H1 (cell line): ENCODE measurements at regions of chr22 and their contacts with region 1.

Region 1: GRCh38 chr22:43014869-43015676 is at the start of gene PACSIN2:
- DNase-seq: peak; percentile 93 to 99
- H3K4me3 ChIP-seq: peak within 1 kb of the TSS; percentile 67 to 87 (median 86)
- H3K27ac ChIP-seq: 0 out of 2 replicates have a peak within 1 kb of the TSS, but pooled peaks have one; percentile 51
- H3K4me1 ChIP-seq: peaks cover 7 to 16% (median 10%) of the 10 kb centered on the region in 4 experiments
- H3K27me3 ChIP-seq: peaks cover 0 to 5% (median 3%) of the 10 kb centered on the region in 4 experiments; a peak in 4 of 7 replicates
- CTCF ChIP-seq: no peak
- EP300 ChIP-seq: no peak
- POLR2A ChIP-seq: peak; percentile 97 to 100
- RAD21 ChIP-seq: no peak
- total RNA-seq, gene PACSIN2: 62.6 and 64.2 TPM in 2 replicates

Region 2: DNA sequence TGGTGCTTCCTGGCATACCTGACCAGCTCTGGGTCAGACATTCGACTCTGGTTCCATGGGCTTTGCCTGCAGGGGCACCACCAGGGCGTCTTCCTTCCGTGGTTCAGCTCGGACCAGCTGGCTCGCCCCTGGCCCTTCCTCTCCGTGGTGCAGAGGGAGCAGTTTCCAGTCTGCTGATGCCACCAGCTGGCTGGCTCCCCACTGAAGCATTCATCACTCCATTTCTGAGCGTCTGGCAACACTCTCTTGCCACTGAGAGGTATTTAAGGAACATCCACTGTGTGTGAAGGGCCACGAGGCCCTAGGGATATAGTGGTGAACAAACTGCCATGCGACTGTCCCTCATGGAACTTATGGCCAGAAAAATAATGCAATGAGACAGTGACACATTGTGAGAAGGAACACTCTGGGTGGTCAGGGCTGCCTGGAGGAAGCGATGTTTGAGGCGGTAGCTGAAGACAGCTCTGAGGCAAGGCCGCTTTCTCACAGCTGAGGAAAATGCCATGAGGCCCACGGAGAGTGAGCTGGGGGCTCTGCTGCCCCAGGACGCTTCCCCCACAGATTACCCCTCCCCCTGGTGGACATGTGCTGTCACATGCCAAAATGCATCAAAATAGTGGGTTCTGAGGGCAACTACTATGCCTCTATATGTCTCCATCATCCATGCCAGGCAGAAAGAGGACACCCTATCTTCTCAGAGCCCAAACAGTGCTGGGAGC is 113.1 kb before region 1 on chr22:
- CTCF ChIA-PET with region 1: interaction called, 5 read pairs
- POLR2A ChIA-PET with region 1: interaction called, 18 read pairs
- DNase-seq: no peak
- H3K4me3 ChIP-seq: no peak overlapping the region
- H3K27ac ChIP-seq: no peak overlapping the region
- H3K4me1 ChIP-seq: peaks cover 0 to 13% (median 6%) of the 10 kb centered on the region in 4 experiments; a peak in 5 of 7 replicates
- H3K27me3 ChIP-seq: no peaks in the 10 kb centered on the region
- CTCF ChIP-seq: peak; percentile 37 to 48 (median 42)
- EP300 ChIP-seq: no peak
- POLR2A ChIP-seq: no peak
- RAD21 ChIP-seq: peak in 1 of 2 experiments; percentile 37; a peak in 1 of 4 replicates

Region 3: DNA sequence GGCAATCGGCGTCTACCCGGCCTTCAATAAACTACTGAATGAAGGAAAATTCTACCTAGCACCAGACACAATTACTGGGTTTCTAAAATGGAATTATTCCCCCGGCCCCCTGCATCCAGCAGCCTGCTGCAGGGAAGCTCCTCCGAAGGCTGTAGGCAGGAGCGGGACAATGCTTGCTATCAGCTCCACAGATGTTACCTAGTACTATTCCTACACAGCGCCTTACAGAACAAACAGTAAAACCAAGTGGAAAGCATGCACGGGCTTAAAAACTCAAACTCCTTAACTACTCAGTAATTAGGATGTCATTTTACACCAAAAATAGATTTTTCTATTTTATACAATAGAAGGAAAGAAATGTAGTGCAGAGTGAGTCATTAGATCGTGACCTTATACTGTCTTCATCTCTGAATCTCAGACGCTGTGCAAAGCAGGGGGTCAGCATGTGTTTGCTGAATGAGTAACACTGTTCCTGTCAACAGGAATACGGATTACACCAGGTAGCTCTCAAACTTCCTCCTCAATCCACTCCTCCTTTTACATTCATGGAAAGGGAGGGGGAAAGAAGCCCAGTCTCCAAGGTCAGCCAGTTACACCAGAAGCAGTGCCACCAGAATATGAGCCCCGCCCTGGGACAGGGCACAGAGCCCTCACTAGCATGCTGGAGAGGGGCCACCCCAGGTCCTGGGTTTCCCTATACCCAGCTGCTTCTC is 75.0 kb before region 1 on chr22:
- CTCF ChIA-PET with region 1: interaction called, 4 read pairs
- POLR2A ChIA-PET with region 1: interaction called, 15 read pairs
- DNase-seq: no peak
- H3K4me3 ChIP-seq: no peak overlapping the region
- H3K27ac ChIP-seq: no peak overlapping the region
- H3K4me1 ChIP-seq: peaks cover 0 to 12% (median 5%) of the 10 kb centered on the region in 4 experiments; a peak in 5 of 7 replicates
- H3K27me3 ChIP-seq: no peaks in the 10 kb centered on the region
- CTCF ChIP-seq: no peak
- EP300 ChIP-seq: no peak
- POLR2A ChIP-seq: no peak
- RAD21 ChIP-seq: no peak

Region 4: GRCh38 chr22:42959576-42960509 is 55.2 kb before region 1 on chr22:
- CTCF ChIA-PET with region 1: interaction called, 3 read pairs
- POLR2A ChIA-PET with region 1: interaction called, 15 read pairs
- DNase-seq: no peak
- H3K4me3 ChIP-seq: no peak overlapping the region
- H3K27ac ChIP-seq: no peak overlapping the region
- H3K4me1 ChIP-seq: peaks cover 13 to 30% (median 29%) of the 10 kb centered on the region in 4 experiments
- H3K27me3 ChIP-seq: no peaks in the 10 kb centered on the region
- CTCF ChIP-seq: no peak
- EP300 ChIP-seq: no peak
- POLR2A ChIP-seq: no peak
- RAD21 ChIP-seq: no peak

Region 5: DNA sequence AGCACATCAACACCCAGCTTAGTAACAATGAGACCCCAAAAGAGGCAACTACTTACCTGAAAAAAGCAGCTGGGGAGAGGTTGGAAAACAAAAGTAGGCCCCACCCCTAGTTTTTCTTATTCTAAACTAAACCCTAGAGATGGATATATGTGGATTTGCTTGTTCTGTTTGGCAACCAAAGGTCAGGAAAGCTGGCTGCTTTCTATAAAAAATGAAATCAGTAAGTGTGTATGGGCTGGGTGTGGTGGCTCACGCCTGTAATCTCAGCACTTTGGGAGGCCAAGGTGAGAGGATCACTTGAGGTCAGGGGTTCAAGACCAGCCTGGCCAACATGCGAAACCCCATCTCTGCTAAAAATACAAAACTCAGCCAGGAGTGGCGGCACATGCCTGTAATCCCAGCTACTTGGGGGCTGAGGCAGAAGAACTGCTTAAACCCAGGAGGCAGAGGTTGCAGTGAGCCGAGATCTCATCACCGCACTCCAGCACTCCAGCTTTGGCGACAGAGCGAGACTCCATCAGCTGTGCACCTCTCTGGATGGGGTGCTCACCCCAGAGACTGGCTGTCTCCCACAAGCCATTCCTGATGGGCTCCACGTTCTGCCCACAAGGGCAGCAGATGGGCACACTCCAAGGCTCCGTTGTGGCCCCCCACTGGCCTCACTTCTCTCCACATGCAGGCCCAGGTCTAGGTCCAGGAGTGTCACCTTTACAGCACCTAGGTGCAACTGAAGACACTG is 30.1 kb before region 1 on chr22:
- CTCF ChIA-PET with region 1: interaction called, 4 read pairs
- POLR2A ChIA-PET with region 1: interaction called, 32 read pairs
- DNase-seq: no peak
- H3K4me3 ChIP-seq: no peak overlapping the region
- H3K27ac ChIP-seq: no peak overlapping the region
- H3K4me1 ChIP-seq: peaks cover 0 to 19% (median 5%) of the 10 kb centered on the region in 4 experiments; a peak in 5 of 7 replicates
- H3K27me3 ChIP-seq: no peaks in the 10 kb centered on the region
- CTCF ChIP-seq: no peak
- EP300 ChIP-seq: no peak
- POLR2A ChIP-seq: no peak
- RAD21 ChIP-seq: no peak

Region 6: GRCh38 chr22:43036282-43036829 is 21.3 kb after region 1 on chr22:
- CTCF ChIA-PET with region 1: interaction called, 6 read pairs
- POLR2A ChIA-PET with region 1: interaction called, 78 read pairs
- DNase-seq: no peak
- H3K4me3 ChIP-seq: no peak overlapping the region
- H3K27ac ChIP-seq: no peak overlapping the region
- H3K4me1 ChIP-seq: no peaks in the 10 kb centered on the region; a peak in 2 of 7 replicates
- H3K27me3 ChIP-seq: no peaks in the 10 kb centered on the region
- CTCF ChIP-seq: no peak
- EP300 ChIP-seq: no peak
- POLR2A ChIP-seq: no peak
- RAD21 ChIP-seq: no peak

Region 7: DNA sequence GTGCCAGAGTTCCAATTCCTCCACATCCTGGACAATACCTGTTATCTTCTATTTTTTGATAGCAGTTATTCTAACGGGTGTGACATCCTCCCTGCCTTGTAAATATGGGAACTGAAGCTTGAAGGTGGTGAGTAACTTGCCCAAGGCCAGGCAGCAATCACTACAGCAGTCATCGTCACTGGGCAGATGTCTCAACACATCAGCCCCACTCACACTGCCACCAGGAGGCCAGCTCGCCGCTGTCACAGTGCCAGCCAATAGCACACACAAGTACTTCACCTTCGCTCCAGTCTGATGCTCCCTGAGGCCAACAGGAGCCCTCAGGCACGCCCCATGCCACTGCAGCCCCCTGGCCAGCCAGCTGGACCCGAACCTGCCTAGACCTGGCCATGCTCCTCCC is 79.0 kb after region 1 on chr22:
- CTCF ChIA-PET with region 1: no interaction called
- POLR2A ChIA-PET with region 1: no interaction called
- DNase-seq: no peak
- H3K4me3 ChIP-seq: no peak overlapping the region
- H3K27ac ChIP-seq: no peak overlapping the region
- H3K4me1 ChIP-seq: no peaks in the 10 kb centered on the region
- H3K27me3 ChIP-seq: no peaks in the 10 kb centered on the region
- CTCF ChIP-seq: peak in 2 of 3 experiments; percentile 11 to 35; a peak in 2 of 4 replicates
- EP300 ChIP-seq: no peak
- POLR2A ChIP-seq: no peak
- RAD21 ChIP-seq: no peak; a peak in 2 of 4 replicates